CD8-positive, alpha-beta T cell (primary cell): ENCODE measurements at regions of chr7 and their contacts with region 1.

Region 1: GRCh38 chr7:121366852-121367431 is 29.2 kb downstream of the FAM3C start:
- DNase-seq: peak in 3 of 9 experiments; percentile 24 to 70 (median 64)
- ATAC-seq: peak; percentile 57
- H3K4me3 ChIP-seq: no peak overlapping the region
- H3K4me3 Mint-ChIP-seq: no peak overlapping the region
- H3K27ac ChIP-seq: no peak overlapping the region
- H3K27ac Mint-ChIP-seq: peak overlapping the region; percentile 41
- H3K4me1 ChIP-seq: no peaks in the 10 kb centered on the region
- H3K4me1 Mint-ChIP-seq: peaks cover 22% of the 10 kb centered on the region
- H3K27me3 ChIP-seq: no peaks in the 10 kb centered on the region
- H3K27me3 Mint-ChIP-seq: no peaks in the 10 kb centered on the region
- CTCF ChIP-seq: peak; percentile 84

Region 2: DNA sequence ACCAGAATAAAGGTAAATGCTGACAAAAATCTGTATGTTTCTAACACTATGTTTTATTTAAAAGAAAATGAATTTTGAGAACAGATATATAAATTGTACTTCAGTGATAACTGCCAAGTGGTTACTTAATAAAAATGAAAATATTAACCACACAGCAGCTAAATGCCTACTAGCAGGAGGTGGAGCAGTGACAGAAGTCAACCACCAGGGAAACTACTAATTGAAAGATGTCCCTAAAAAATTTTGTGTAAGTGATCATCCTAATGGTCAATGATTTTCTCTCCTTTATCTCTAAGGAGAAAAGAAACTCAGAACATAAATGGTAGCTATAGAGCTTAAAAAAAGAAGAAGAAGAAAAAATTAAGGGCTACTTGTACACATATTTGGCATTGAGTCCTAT is 15.3 kb before region 1 on chr7:
- CTCF ChIA-PET with region 1: interaction called, 11 read pairs
- POLR2A ChIA-PET with region 1: no interaction called
- intact Hi-C with region 1: no loop called
- DNase-seq: no peak
- ATAC-seq: no peak
- H3K4me3 ChIP-seq: no peak overlapping the region
- H3K4me3 Mint-ChIP-seq: no peak overlapping the region
- H3K27ac ChIP-seq: no peak overlapping the region
- H3K27ac Mint-ChIP-seq: no peak overlapping the region
- H3K4me1 ChIP-seq: no peaks in the 10 kb centered on the region
- H3K4me1 Mint-ChIP-seq: no peaks in the 10 kb centered on the region
- H3K27me3 ChIP-seq: no peaks in the 10 kb centered on the region
- H3K27me3 Mint-ChIP-seq: no peaks in the 10 kb centered on the region
- CTCF ChIP-seq: no peak

Region 3: DNA sequence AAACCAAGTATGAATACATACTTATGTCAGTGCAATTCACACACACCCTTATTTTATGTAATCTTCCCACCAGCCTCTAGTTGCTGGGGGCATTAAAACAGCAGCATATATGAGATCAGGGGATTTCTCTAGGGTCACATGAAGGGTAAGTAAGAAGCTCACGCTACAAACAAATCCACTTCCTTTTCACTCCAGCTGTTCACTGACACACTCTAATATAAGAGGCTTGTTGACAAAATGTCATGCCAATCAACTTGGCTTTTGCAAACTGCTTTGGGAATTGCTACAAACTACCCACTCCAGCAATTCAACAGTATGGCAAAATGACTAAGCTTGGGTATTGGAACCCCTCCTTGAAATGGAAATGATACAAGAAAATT is 18.8 kb after region 1 on chr7:
- CTCF ChIA-PET with region 1: interaction called, 12 read pairs
- POLR2A ChIA-PET with region 1: interaction called, 5 read pairs
- intact Hi-C with region 1: loop called in 1 of 2 experiments (anchors 2 kb)
- DNase-seq: peak in 2 of 9 experiments; percentile 52 to 74
- ATAC-seq: peak; percentile 92
- H3K4me3 ChIP-seq: no peak overlapping the region
- H3K4me3 Mint-ChIP-seq: peak overlapping the region; percentile 12
- H3K27ac ChIP-seq: no peak overlapping the region
- H3K27ac Mint-ChIP-seq: peak overlapping the region; percentile 39
- H3K4me1 ChIP-seq: peaks cover 42% of the 10 kb centered on the region
- H3K4me1 Mint-ChIP-seq: peaks cover 73% of the 10 kb centered on the region
- H3K27me3 ChIP-seq: no peaks in the 10 kb centered on the region
- H3K27me3 Mint-ChIP-seq: no peaks in the 10 kb centered on the region
- CTCF ChIP-seq: no peak

Region 4: GRCh38 chr7:121406944-121407343 is 40.0 kb after region 1 on chr7:
- CTCF ChIA-PET with region 1: no interaction called
- POLR2A ChIA-PET with region 1: no interaction called
- intact Hi-C with region 1: no loop called
- DNase-seq: no peak
- ATAC-seq: no peak
- H3K4me3 ChIP-seq: no peak overlapping the region
- H3K4me3 Mint-ChIP-seq: no peak overlapping the region
- H3K27ac ChIP-seq: no peak overlapping the region
- H3K27ac Mint-ChIP-seq: no peak overlapping the region
- H3K4me1 ChIP-seq: no peaks in the 10 kb centered on the region
- H3K4me1 Mint-ChIP-seq: peaks cover 4% of the 10 kb centered on the region
- H3K27me3 ChIP-seq: peaks cover 0 to 3% of the 10 kb centered on the region in 2 experiments
- H3K27me3 Mint-ChIP-seq: peaks cover 3% of the 10 kb centered on the region
- CTCF ChIP-seq: no peak

Region 5: GRCh38 chr7:121437456-121438127 is 70.7 kb after region 1 on chr7:
- CTCF ChIA-PET with region 1: interaction called, 12 read pairs
- POLR2A ChIA-PET with region 1: no interaction called
- intact Hi-C with region 1: loop called (anchors 1 to 5 kb)
- DNase-seq: no peak
- ATAC-seq: no peak
- H3K4me3 ChIP-seq: peak overlapping the region in 1 of 2 experiments; percentile 27
- H3K4me3 Mint-ChIP-seq: peak overlapping the region; percentile 78
- H3K27ac ChIP-seq: peak overlapping the region in 1 of 2 experiments; percentile 55
- H3K27ac Mint-ChIP-seq: peak overlapping the region; percentile 93
- H3K4me1 ChIP-seq: peaks cover 18% of the 10 kb centered on the region
- H3K4me1 Mint-ChIP-seq: peaks cover 35% of the 10 kb centered on the region
- H3K27me3 ChIP-seq: no peaks in the 10 kb centered on the region
- H3K27me3 Mint-ChIP-seq: no peaks in the 10 kb centered on the region
- CTCF ChIP-seq: no peak

Region 6: DNA sequence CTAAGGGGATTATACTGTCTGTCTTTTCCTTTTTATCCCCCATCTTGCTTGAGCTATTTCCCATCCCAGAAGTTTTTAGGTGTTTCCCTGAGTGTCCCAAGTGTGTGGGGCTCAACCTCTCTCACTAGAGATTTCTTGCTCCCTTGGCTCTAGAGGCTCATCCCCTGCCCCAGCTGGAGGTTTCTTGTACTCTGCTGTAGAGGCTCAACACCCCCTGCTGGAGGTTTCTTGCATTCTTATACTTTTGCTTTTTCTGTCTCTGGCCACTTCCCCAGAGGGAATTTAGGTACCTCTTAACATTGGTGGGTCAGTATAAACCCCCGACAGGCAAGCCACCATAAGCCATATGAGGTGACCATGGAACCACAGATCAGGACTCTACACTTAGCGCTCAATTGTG is 143.4 kb after region 1 on chr7:
- CTCF ChIA-PET with region 1: interaction called, 35 read pairs
- POLR2A ChIA-PET with region 1: no interaction called
- intact Hi-C with region 1: loop called (anchors 1 kb)
- DNase-seq: peak in 5 of 9 experiments; percentile 10 to 54 (median 38)
- ATAC-seq: no peak
- H3K4me3 ChIP-seq: no peak overlapping the region
- H3K4me3 Mint-ChIP-seq: no peak overlapping the region
- H3K27ac ChIP-seq: no peak overlapping the region
- H3K27ac Mint-ChIP-seq: no peak overlapping the region
- H3K4me1 ChIP-seq: no peaks in the 10 kb centered on the region
- H3K4me1 Mint-ChIP-seq: no peaks in the 10 kb centered on the region
- H3K27me3 ChIP-seq: no peaks in the 10 kb centered on the region
- H3K27me3 Mint-ChIP-seq: no peaks in the 10 kb centered on the region
- CTCF ChIP-seq: peak; percentile 28

Region 7: GRCh38 chr7:121994625-121995410 is 627.9 kb after region 1 on chr7:
- CTCF ChIA-PET with region 1: no interaction called
- POLR2A ChIA-PET with region 1: no interaction called
- intact Hi-C with region 1: loop called in 1 of 2 experiments (anchors 5 kb)
- DNase-seq: peak in 5 of 9 experiments; percentile 10 to 34 (median 23)
- ATAC-seq: peak; percentile 55
- H3K4me3 ChIP-seq: no peak overlapping the region
- H3K4me3 Mint-ChIP-seq: no peak overlapping the region
- H3K27ac ChIP-seq: no peak overlapping the region
- H3K27ac Mint-ChIP-seq: no peak overlapping the region
- H3K4me1 ChIP-seq: no peaks in the 10 kb centered on the region
- H3K4me1 Mint-ChIP-seq: no peaks in the 10 kb centered on the region
- H3K27me3 ChIP-seq: no peaks in the 10 kb centered on the region
- H3K27me3 Mint-ChIP-seq: no peaks in the 10 kb centered on the region
- CTCF ChIP-seq: peak; percentile 49